Activated CD4-positive, alpha-beta T cell treated with anti-CD3 and anti-CD28 coated beads, Interleukin-2, amount 10 ng/mL, durations not matched to agents 24 days and 14 days (primary cell): ENCODE measurements at regions of chr6 and their contacts with region 1.

Region 1: GRCh38 chr6:37137201-37138090 is 32.5 kb upstream of the PIM1 start:
- DNase-seq: peak; percentile 62
- H3K4me3 Mint-ChIP-seq: peak overlapping the region; percentile 5
- H3K27ac Mint-ChIP-seq: peak overlapping the region; percentile 87
- H3K4me1 Mint-ChIP-seq: peaks cover 35% of the 10 kb centered on the region
- H3K27me3 Mint-ChIP-seq: no peaks in the 10 kb centered on the region

Region 2: GRCh38 chr6:37051138-37052026 is 86.1 kb before region 1 on chr6:
- intact Hi-C with region 1: loop called (anchors 1 kb)
- DNase-seq: peak; percentile 96
- H3K4me3 Mint-ChIP-seq: peak overlapping the region; percentile 88
- H3K27ac Mint-ChIP-seq: peak overlapping the region; percentile 98
- H3K4me1 Mint-ChIP-seq: peaks cover 57% of the 10 kb centered on the region
- H3K27me3 Mint-ChIP-seq: no peaks in the 10 kb centered on the region

Region 3: DNA sequence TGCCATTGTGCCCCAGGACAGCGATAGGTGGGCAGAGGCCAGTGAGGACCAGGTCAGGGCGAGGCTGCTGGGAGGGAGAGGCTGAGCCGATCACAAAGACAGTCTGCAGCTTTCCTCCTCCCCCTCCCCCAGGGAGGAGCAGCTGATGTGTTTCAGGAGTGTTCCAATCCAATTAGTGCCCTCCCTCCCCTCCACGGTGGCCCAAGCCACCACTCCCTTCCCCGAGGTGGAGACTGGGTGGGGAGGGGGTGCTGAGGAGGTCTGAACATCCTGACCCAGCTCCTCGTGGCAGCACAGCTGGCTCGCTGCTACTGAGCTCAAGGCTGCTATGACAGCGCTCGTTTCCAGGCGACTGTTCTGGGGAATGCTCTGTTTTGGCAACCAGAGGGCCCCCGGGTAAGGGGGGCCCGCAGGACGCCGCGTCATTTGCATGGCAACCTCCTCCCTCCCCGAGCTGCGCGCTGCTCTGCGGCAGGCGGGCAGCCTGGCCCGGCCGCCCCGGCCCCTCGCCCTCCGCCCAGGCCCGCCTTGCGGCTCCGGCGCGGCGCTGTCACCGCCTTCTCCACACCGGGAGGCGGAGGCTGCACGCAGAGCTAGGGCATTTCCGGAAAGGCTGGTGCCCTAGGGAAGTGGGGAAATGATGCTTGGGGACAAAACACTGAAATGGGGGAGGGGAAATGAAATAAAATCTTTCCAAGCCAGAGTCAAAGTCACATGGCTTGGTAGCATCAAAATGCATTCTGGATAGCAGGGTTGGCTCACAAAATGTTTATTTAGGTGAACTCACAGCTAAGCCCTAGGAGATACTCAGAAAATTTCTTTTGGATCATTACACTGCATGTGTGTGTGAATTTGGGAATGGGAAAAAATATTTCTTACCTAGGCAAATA is 34.9 kb before region 1 on chr6:
- intact Hi-C with region 1: loop called (anchors 2 kb)
- DNase-seq: peak; percentile 93
- H3K4me3 Mint-ChIP-seq: peak overlapping the region; percentile 69
- H3K27ac Mint-ChIP-seq: peak overlapping the region; percentile 92
- H3K4me1 Mint-ChIP-seq: peaks cover 36% of the 10 kb centered on the region
- H3K27me3 Mint-ChIP-seq: no peaks in the 10 kb centered on the region

Region 4: DNA sequence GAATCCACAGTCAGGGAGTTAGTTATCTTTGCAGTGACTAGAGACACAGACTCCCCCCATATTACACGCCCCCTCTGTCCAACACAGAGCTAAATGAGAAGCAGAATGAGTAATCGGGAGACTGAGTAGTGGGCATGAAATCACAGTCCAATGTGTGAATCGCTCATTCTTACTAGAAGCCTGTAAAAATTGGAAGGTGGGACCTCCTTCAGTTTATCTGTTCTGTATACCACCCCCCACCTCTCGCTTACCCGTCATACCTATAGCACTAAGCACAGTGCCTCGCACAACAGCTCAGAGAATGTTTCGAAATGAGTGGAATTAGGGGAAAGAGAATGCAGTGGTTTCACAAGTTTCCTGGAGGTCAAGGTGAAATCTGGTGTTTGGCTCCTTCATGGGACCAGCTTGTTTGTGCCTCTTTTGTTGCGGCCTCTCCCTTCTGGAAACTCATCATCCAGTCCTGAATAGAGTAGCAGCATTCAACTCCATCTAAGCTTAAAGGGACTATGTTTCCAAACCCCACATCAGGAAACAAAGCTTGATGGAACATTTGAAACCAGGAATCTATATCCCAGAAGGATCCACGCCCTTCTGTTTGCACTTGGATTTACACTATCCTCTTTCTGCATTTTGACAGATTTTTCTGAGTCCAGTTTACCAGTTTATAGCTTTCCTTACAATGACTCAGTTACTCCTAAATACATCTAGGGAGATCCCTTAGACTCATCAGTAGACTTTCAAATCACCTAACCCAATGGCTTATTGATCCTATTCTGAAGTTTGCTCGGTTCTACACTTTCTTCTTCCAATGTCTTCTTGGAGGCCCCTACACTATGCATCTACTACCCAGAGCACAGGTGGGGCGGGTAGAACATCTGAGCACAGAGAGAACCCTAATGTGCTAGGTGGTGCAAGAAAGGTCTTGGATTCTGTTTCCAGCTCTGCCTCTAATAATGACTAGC is 26.7 kb before region 1 on chr6:
- intact Hi-C with region 1: loop called (anchors 2 kb)
- DNase-seq: peak; percentile 69
- H3K4me3 Mint-ChIP-seq: no peak overlapping the region
- H3K27ac Mint-ChIP-seq: peak overlapping the region; percentile 76
- H3K4me1 Mint-ChIP-seq: peaks cover 13% of the 10 kb centered on the region
- H3K27me3 Mint-ChIP-seq: peaks cover 2% of the 10 kb centered on the region

Region 5: DNA sequence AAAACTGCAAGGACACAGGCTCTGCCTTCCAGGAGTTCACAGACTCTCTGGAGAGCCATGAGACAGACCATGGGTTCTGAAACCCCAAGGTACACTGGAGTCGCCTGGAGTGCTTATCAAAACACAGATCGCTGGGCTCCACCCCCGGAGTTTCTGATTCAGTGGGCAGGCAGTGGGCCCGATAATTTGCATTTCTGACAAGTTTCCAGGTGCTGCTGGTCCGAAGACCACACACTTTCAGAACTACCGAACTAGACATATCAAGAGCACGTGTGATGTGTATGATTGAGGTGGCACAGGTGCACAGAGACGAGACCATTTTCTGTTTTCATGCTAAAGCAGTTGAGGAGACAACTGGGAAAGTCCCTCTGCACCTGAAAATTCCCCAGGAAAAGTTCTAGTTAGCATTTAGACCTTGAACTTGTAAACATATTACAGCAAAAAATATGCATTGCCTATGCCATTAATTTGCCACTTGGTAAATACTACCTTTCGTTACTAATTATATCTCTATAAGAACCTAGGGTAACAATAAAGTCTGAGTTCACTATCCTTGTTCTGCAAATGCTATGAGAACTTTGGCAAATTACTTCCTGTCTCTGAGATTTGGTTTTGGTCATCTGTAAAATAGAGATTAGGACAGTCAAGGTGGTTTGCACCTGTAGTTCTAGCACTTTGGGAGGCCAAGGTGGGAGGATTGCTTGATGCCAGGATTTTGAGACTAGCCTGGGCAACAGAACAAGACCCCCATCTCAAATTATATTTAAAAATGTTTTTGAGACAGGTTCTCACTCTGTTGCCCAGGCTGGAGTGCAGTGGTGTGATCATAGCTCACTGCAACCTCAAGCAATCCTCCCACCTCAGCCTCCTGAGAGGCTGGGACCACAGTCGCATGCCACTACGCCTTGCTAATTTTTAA is 18.2 kb after region 1 on chr6:
- intact Hi-C with region 1: loop called (anchors 1 kb)
- DNase-seq: peak; percentile 84
- H3K4me3 Mint-ChIP-seq: peak overlapping the region; percentile 66
- H3K27ac Mint-ChIP-seq: peak overlapping the region; percentile 81
- H3K4me1 Mint-ChIP-seq: peaks cover 22% of the 10 kb centered on the region
- H3K27me3 Mint-ChIP-seq: peaks cover 1% of the 10 kb centered on the region

Region 6: DNA sequence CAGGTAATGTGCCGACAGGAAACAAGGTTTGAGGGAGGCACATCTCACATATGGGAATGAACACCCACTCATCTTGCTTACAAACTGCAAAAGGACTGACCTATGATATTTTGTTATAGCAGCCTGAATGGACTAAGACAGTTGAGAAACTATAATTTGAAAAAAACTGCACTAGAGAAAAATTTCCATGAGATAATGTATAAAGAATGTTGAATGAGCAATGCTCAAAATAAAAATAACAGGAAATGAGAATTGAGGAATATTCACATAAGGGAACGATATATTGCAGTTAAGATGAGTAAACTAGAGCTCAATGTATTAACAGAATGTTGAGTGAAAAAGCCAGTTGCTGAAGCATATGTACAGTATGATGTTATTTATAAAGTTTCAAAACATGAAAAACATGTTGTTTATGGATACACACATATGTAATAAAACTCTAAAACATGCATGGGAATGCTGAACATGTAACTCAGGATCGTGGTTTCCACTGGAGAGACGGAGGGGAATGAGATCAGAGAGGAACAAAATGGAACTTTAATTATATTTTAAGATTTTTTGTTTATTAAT is 113.8 kb after region 1 on chr6:
- intact Hi-C with region 1: no loop called
- DNase-seq: no peak
- H3K4me3 Mint-ChIP-seq: no peak overlapping the region
- H3K27ac Mint-ChIP-seq: no peak overlapping the region
- H3K4me1 Mint-ChIP-seq: peaks cover 14% of the 10 kb centered on the region
- H3K27me3 Mint-ChIP-seq: no peaks in the 10 kb centered on the region